PC-9 (cell line): ENCODE measurements at regions of chr15 and their contacts with region 1.

Region 1: GRCh38 chr15:36996538-36997181 is 103.7 kb downstream of the MEIS2 start:
- DNase-seq: no peak
- H3K4me3 ChIP-seq: no peak overlapping the region
- H3K27ac ChIP-seq: no peak overlapping the region
- H3K4me1 ChIP-seq: no peaks in the 10 kb centered on the region
- H3K27me3 ChIP-seq: no peaks in the 10 kb centered on the region
- CTCF ChIP-seq: no peak

Region 2: DNA sequence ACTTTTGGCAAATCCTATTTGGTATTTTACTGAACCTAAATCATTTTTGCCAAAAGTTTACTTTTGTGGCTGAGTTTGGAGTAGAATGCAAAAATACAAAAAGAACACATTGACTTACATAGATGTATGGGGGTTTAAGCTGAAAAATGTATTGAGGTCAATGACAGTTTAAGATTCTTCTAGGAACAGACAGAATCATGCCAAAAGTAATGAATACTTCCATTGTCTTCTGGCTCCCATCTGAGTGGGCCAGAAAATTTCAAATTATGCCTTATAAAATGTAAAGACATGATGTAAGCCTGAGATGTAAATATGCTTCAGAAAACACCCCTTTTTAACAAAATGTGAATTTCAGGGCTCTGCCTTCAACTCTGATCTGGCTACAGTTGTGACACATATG is 1075.6 kb before region 1 on chr15:
- CTCF ChIA-PET with region 1: no interaction called
- POLR2A ChIA-PET with region 1: interaction called, 16 read pairs
- intact Hi-C with region 1: no loop called
- DNase-seq: no peak
- H3K4me3 ChIP-seq: no peak overlapping the region
- H3K27ac ChIP-seq: no peak overlapping the region
- H3K4me1 ChIP-seq: no peaks in the 10 kb centered on the region
- H3K27me3 ChIP-seq: no peaks in the 10 kb centered on the region
- CTCF ChIP-seq: no peak

Region 3: DNA sequence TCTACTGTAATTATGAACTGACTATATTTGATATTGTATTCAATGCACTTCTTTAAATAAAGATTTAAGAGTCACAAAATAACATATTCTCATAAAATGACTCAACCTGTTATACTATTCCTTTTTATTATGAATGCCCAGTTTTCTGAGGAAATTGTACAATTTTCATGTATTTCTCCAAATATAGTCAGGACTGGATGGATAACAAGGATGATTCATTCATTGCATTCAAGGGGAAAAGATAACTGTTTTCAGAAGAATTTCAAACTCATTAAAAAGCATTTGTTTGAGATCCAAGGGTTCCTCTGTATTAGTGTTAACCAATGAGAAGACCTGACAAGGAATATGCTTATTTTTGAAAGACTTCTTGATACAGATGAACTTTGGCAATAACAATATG is 60.0 kb before region 1 on chr15:
- CTCF ChIA-PET with region 1: interaction called, 11 read pairs
- POLR2A ChIA-PET with region 1: no interaction called
- intact Hi-C with region 1: no loop called
- DNase-seq: no peak
- H3K4me3 ChIP-seq: no peak overlapping the region
- H3K27ac ChIP-seq: no peak overlapping the region
- H3K4me1 ChIP-seq: no peaks in the 10 kb centered on the region
- H3K27me3 ChIP-seq: no peaks in the 10 kb centered on the region
- CTCF ChIP-seq: no peak

Region 4: GRCh38 chr15:36951731-36952247 is 44.9 kb before region 1 on chr15:
- CTCF ChIA-PET with region 1: no interaction called
- POLR2A ChIA-PET with region 1: no interaction called
- intact Hi-C with region 1: no loop called
- DNase-seq: no peak
- H3K4me3 ChIP-seq: no peak overlapping the region
- H3K27ac ChIP-seq: no peak overlapping the region
- H3K4me1 ChIP-seq: no peaks in the 10 kb centered on the region
- H3K27me3 ChIP-seq: no peaks in the 10 kb centered on the region
- CTCF ChIP-seq: no peak